ENCODE measurements at regions of chr5 and their contacts with region 1.

Region 1: GRCh38 chr5:150458819-150459557 is 9.4 kb upstream of the RPS14 start:
- DNase-seq: peak; percentile 88
- H3K4me3 Mint-ChIP-seq: peak overlapping the region; percentile 45
- H3K27ac Mint-ChIP-seq: no peak overlapping the region
- H3K4me1 Mint-ChIP-seq: peaks cover 32% of the 10 kb centered on the region
- H3K27me3 Mint-ChIP-seq: no peaks in the 10 kb centered on the region

Region 2: GRCh38 chr5:150469718-150470469 is 10.9 kb after region 1 on chr5:
- CTCF ChIA-PET with region 1: no interaction called
- intact Hi-C with region 1: no loop called
- DNase-seq: no peak
- H3K4me3 Mint-ChIP-seq: no peak overlapping the region
- H3K27ac Mint-ChIP-seq: no peak overlapping the region
- H3K4me1 Mint-ChIP-seq: no peaks in the 10 kb centered on the region
- H3K27me3 Mint-ChIP-seq: no peaks in the 10 kb centered on the region

Region 3: DNA sequence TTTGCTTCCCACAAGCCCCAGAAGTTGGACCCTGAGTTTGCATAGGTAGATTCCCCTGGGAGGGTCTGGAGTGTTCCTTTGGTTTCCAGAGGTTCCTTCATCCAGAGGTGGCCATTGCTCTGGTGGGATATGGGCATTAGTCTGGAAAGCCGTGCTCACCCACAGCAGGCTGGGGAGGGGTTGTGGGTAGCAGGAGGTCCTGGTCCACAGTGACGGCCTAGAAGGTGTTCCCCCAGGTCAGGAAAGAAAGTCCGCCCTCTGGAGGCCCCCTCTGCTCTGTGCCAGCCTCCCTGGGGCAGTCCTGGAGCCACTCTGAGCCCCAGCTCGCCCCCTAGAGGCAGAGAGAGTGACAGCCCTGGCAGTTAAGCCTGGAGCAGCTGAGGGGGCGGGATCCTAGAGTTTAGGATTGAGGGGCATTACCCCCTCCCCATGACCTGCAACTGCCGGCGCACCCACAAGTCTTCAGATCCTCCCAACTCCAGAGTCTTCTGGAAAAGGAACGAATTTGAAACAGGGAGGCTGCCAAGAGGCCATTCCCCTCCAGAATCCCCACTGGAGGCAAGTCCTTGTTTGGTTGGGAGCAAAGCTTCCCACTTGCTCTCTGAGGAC is 85.7 kb after region 1 on chr5:
- CTCF ChIA-PET with region 1: interaction called, 42 read pairs
- intact Hi-C with region 1: loop called (anchors 1 kb)
- DNase-seq: peak; percentile 81
- H3K4me3 Mint-ChIP-seq: no peak overlapping the region
- H3K27ac Mint-ChIP-seq: no peak overlapping the region
- H3K4me1 Mint-ChIP-seq: no peaks in the 10 kb centered on the region
- H3K27me3 Mint-ChIP-seq: no peaks in the 10 kb centered on the region

Region 4: DNA sequence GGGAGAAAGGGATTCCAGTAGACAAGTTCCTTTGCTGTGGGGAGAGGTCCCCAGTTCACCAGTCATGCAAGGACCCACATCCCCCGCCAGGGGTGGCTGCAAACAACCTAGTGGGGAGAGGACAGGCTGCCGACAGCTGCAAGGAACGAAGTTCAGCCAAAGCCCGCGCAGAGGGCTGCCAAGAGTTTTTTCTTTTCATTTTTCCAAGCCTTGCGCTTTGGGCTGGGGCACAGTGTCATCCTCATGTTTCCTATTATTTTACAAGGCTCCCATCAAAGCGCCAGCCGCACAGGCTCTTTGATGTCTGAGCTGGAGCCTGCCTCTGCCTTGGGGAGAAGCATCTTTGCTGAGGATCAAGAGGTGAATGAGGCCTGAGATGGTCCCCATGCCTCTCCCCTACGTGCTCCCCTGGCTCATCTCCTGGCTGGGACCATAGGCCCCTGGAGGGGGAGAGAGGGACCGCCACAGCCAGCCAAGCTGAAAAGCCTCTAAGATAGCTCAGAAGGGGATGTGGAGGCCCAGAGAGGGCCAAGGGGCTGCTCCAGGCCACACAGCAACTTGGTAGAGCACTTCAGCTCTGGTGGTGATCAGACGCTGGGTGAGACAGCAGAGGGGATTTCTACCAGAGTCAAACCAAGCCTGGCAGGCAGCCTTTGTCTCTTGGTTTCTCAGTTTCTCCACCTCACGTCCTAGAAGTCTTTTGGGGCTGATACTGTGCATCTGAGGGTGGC is 131.0 kb after region 1 on chr5:
- CTCF ChIA-PET with region 1: no interaction called
- intact Hi-C with region 1: no loop called
- DNase-seq: no peak
- H3K4me3 Mint-ChIP-seq: no peak overlapping the region
- H3K27ac Mint-ChIP-seq: no peak overlapping the region
- H3K4me1 Mint-ChIP-seq: no peaks in the 10 kb centered on the region
- H3K27me3 Mint-ChIP-seq: no peaks in the 10 kb centered on the region

Region 5: GRCh38 chr5:150656191-150657132 is 197.5 kb after region 1 on chr5:
- CTCF ChIA-PET with region 1: interaction called, 6 read pairs
- intact Hi-C with region 1: loop called (anchors 1 kb)
- DNase-seq: peak; percentile 77
- H3K4me3 Mint-ChIP-seq: peak overlapping the region; percentile 76
- H3K27ac Mint-ChIP-seq: no peak overlapping the region
- H3K4me1 Mint-ChIP-seq: peaks cover 2% of the 10 kb centered on the region
- H3K27me3 Mint-ChIP-seq: no peaks in the 10 kb centered on the region

Region 6: GRCh38 chr5:151051066-151051930 is 592.3 kb after region 1 on chr5:
- CTCF ChIA-PET with region 1: no interaction called
- intact Hi-C with region 1: loop called (anchors 5 kb)
- DNase-seq: peak; percentile 85
- H3K4me3 Mint-ChIP-seq: no peak overlapping the region
- H3K27ac Mint-ChIP-seq: peak overlapping the region; percentile 16
- H3K4me1 Mint-ChIP-seq: no peaks in the 10 kb centered on the region
- H3K27me3 Mint-ChIP-seq: no peaks in the 10 kb centered on the region

Measured in activated naive CD4-positive, alpha-beta T cell treated with anti-CD3 and anti-CD28 coated beads for 36 hours (primary cell).